Sciatic nerve (tissue), 2 donors: ENCODE measurements at regions of chr2 and their contacts with region 1.

Region 1: GRCh38 chr2:126302043-126302442 is 353.9 kb upstream of the GYPC start:
- DNase-seq: no peak
- ATAC-seq: no peak

Region 2: DNA sequence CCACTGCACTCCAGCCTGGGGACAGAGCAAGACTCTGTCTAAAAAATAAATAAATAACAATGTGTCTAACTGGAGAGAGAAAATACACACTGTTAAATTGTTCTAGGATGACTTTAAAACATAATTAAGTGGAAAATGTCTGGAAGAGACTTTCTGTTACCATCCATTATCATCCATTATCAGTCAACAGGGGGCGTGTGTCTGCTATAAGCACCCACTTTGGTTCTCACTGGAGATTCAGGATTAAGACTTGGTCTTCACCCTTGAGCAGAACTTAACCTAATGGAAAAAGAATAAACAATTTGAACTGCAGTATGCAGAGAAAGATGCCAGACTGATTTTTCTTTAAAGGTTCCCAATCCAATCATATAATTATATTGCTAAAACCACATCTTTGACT is 645.9 kb before region 1 on chr2:
- intact Hi-C with region 1: loop called (anchors 5 kb)
- DNase-seq: no peak
- ATAC-seq: no peak

Region 3: GRCh38 chr2:125885340-125885739 is 416.7 kb before region 1 on chr2:
- intact Hi-C with region 1: no loop called
- DNase-seq: no peak
- ATAC-seq: no peak

Region 4: DNA sequence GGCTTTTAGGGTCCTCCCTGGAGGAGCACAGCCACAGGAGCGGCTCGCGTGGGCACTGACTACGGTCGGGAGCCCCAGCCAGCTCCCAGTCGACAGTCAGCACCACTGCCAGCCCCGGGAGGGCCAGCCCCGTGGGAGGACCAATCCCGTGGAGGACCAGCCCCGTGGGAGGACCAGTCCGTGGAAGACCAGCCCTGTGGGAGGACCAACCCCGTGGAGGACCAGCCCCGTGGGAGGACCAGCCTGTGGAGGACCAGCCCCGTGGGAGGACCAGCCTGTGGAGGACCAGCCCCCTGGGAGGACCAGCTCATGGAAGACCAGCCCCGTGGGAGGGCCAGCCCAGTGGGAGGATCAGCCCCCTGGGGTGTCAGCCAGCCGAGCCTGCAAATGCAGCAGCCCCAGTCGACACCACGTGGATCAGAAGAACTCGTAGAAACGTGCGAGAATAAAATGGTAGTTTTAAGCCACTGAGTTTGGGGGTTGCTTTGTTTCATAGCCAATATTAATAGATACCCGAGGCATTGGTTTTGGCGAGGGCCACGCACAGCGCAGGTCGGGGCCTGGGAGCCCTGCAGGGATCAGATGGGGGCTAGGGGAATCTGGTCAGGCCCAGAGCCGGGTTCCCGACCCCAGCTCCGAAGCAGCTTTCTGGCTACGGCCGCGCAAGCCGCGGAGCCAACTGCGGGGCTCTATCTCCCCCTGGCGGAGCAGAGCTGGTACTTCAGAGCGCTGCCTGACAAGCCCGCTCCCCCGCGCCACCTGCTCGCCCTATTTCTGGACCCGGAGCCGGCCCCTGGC is 669.6 kb after region 1 on chr2:
- intact Hi-C with region 1: no loop called
- DNase-seq: peak; percentile 85
- ATAC-seq: peak; percentile 91